GM18951 (cell line): ENCODE measurements at regions of chr10 and their contacts with region 1.

Region 1: DNA sequence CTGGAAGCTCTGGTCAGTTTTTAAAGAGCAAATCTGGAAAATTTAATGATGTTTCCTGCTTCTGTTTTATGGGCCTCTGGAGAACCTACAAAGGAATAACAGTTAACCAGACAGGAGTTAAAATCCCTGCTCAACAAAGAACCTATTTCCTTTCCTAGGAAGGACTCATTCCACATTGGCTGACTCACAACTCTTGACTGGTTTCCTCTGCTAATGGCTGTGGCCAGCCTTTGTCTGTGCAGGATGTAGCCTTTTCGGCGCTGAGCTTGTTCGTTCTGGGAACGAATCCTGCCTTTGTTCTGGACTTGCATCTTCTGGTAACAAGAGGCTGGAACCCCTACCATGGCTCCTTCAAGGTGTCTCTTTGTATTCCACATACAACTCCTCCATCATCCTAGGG is 112.8 kb upstream of the PDCD4 start:
- POLR2A ChIP-seq: no peak

Region 2: GRCh38 chr10:110815354-110816004 is 56.6 kb after region 1 on chr10:
- in situ Hi-C with region 1: no loop called
- POLR2A ChIP-seq: no peak

Region 3: GRCh38 chr10:110883924-110884323 is 125.0 kb after region 1 on chr10:
- in situ Hi-C with region 1: loop called (anchors 10 kb)
- POLR2A ChIP-seq: no peak

Region 4: DNA sequence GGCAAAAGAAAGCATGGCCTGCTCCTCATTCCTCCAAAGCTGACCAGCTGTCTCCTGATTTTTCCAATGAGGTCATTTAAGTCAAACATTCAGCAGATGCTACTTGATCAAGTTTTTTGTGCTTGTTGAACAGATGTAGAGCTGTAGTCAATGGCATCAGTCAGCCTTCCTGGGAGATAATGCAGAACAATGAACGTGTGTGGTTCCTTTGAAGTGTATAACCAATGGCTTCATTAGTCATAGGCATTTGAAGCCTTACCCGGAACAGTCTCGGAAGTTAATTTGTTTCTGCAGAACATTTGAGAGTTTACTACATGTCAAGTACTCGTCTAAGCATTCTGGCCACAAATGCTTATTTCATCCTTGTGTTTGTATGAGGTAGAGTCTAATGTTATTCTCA is 545.0 kb after region 1 on chr10:
- in situ Hi-C with region 1: no loop called
- POLR2A ChIP-seq: no peak